Activated T-helper 2 cell treated with anti-CD3 and anti-CD28 coated beads, Interferon-gamma antibody, Interleukin-2, Interleukin-4, amounts not matched to agents 10 μg/mL and 5 μg/mL and 100 μg/mL, durations not matched to agents 14 hours and 24 hours and 36 hours (primary cell): ENCODE measurements at regions of chr6 and their contacts with region 1.

Region 1: DNA sequence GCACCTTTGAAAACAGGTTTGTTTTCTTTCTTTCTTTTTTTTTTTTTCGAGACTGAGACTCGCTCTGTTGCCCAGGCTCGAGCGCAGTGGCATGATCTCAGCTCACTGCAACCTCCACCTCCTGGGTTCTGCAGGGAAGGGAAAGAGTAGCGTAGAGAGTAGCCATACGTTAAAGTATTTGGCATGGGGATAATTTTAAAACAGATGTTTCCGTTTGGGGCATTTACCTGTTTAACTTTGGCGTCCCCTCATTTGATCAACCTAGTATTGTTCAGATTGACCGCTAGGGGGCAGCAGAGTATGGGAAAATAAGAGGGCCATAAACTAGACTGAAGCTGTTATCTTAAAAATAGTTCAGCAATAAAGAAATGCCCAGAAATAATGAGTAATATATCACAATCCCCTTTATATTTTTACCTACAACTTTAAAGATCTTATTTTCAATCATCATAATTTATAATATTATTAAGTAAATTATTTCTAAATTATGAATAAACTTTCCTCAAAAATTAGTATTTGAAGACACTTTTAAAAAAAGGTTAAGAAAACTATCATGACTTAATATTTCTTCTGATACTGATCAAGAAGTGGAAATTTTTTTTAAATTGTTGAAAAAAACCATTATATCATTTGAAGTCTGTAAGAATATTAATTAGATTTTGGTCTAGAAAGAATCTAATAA is 7.6 kb upstream of the TAAR9 start:
- DNase-seq: peak; percentile 36
- H3K4me3 Mint-ChIP-seq: no peak overlapping the region
- H3K27ac Mint-ChIP-seq: no peak overlapping the region
- H3K4me1 Mint-ChIP-seq: no peaks in the 10 kb centered on the region
- H3K27me3 Mint-ChIP-seq: peaks cover 18% of the 10 kb centered on the region

Region 2: DNA sequence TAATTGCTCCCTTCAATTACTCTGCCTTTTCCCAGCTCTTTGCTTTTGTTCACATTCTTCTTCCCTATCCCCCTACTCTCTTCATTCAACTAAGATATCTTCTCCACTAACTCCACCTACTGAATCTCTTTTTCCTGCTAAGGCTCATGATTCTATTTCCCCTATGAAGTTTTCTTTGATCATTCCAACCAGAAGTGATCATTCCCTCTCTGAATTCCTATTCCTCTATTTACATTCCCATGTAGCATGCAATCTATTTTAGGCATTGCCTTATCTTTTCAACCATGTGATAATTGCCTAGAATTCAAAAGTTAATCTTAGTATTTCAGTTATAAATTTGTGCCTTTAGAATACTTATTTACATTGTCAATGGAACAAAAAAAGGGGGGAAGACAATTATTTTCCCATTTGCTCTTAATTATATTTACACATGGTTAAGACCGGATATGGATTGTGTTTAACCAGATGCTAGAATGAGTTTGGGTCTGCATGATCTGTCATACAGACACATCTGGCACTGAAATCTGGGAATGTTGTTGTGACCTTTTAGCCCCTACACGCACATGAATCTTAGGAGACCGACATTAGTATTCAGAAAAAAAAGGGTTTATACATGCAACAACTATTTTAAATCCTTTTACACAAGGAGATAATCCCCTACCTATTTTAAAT is 149.9 kb before region 1 on chr6:
- intact Hi-C with region 1: no loop called
- DNase-seq: no peak
- H3K4me3 Mint-ChIP-seq: no peak overlapping the region
- H3K27ac Mint-ChIP-seq: no peak overlapping the region
- H3K4me1 Mint-ChIP-seq: no peaks in the 10 kb centered on the region
- H3K27me3 Mint-ChIP-seq: peaks cover 27% of the 10 kb centered on the region

Region 3: DNA sequence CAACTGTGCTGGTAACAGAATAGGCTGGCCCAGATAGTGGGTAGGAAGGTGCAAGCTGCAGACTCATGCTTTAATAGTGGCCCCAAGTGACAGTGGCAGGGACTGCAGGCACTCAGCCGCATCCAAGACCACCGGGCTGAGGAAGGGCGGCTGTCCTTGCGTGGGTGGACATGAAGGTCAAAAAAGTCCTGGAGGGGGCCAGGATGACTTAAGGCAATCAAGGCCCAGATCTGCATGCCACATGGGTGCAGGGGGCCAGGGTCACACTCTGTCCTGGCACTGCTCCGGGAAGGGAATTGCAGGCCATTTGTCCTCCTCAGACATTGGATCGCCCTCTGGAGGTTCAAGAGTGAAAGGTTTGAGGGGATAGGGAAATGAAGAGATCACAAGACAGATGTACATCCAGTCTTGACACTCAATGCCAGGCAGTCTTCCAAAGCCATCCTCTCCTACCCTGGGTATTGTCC is 237.7 kb after region 1 on chr6:
- intact Hi-C with region 1: loop called (anchors 1 kb)
- DNase-seq: peak; percentile 21
- H3K4me3 Mint-ChIP-seq: no peak overlapping the region
- H3K27ac Mint-ChIP-seq: no peak overlapping the region
- H3K4me1 Mint-ChIP-seq: peaks cover 17% of the 10 kb centered on the region
- H3K27me3 Mint-ChIP-seq: peaks cover 2% of the 10 kb centered on the region

Region 4: GRCh38 chr6:132798869-132799538 is 268.6 kb after region 1 on chr6:
- intact Hi-C with region 1: loop called (anchors 1 kb)
- DNase-seq: peak; percentile 53
- H3K4me3 Mint-ChIP-seq: peak overlapping the region; percentile 90
- H3K27ac Mint-ChIP-seq: no peak overlapping the region
- H3K4me1 Mint-ChIP-seq: peaks cover 6% of the 10 kb centered on the region
- H3K27me3 Mint-ChIP-seq: peaks cover 8% of the 10 kb centered on the region

Region 5: GRCh38 chr6:132820629-132821381 is 290.4 kb after region 1 on chr6:
- intact Hi-C with region 1: loop called (anchors 5 kb)
- DNase-seq: no peak
- H3K4me3 Mint-ChIP-seq: no peak overlapping the region
- H3K27ac Mint-ChIP-seq: peak overlapping the region; percentile 61
- H3K4me1 Mint-ChIP-seq: peaks cover 32% of the 10 kb centered on the region
- H3K27me3 Mint-ChIP-seq: peaks cover 5% of the 10 kb centered on the region